ENCODE measurements at regions of chr11 and their contacts with region 1.

Region 1: GRCh38 chr11:86869966-86870570 is 69.7 kb downstream of the PRSS23 start:
- DNase-seq: peak; percentile 53
- H3K4me3 ChIP-seq: no peak overlapping the region
- H3K27ac ChIP-seq: no peak overlapping the region
- H3K4me1 ChIP-seq: no peaks in the 10 kb centered on the region
- CTCF ChIP-seq: peak; percentile 87

Region 2: DNA sequence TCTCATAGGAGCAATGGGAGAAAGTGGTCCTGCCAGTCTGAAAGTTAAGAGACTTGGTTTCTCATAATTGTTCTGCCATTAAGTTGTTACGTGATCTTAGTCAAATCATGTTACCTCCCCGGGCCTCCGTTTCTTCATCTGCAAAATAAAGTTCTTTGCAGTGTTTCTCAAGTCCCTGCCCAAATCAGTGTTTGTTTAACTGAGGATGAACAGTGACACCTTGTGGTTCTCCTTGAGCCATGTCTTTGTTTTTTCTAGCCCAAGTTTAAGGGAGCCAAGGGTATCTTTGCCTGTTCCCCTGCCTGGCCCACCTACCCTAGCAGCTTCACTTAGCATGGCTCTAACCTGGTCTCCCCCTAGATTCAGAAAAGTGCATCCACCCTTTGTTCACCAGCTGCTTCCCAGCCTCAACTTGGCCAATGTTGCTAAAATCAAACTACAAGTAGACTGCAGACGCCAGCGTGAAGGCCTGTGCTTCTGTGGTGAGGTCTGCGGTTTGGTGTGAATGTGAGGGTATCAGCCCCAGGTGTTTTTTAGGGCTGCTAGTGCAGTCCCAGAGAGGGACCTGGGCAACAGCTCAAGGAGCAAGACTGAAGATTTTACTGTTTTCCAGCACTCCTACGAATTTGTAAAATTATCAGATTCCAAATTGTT is 49.6 kb after region 1 on chr11:
- CTCF ChIA-PET with region 1: no interaction called
- POLR2A ChIA-PET with region 1: interaction called, 3 read pairs
- intact Hi-C with region 1: loop called (anchors 2 kb)
- DNase-seq: peak; percentile 48
- H3K4me3 ChIP-seq: no peak overlapping the region
- H3K27ac ChIP-seq: no peak overlapping the region
- H3K4me1 ChIP-seq: no peaks in the 10 kb centered on the region
- CTCF ChIP-seq: peak; percentile 79

Region 3: GRCh38 chr11:87203907-87204602 is 334.0 kb after region 1 on chr11:
- CTCF ChIA-PET with region 1: no interaction called
- POLR2A ChIA-PET with region 1: no interaction called
- intact Hi-C with region 1: no loop called
- DNase-seq: no peak
- H3K4me3 ChIP-seq: no peak overlapping the region
- H3K27ac ChIP-seq: no peak overlapping the region
- H3K4me1 ChIP-seq: no peaks in the 10 kb centered on the region
- CTCF ChIP-seq: no peak

Region 4: GRCh38 chr11:87265132-87265531 is 395.1 kb after region 1 on chr11:
- CTCF ChIA-PET with region 1: no interaction called
- POLR2A ChIA-PET with region 1: no interaction called
- intact Hi-C with region 1: no loop called
- DNase-seq: no peak
- H3K4me3 ChIP-seq: no peak overlapping the region
- H3K27ac ChIP-seq: no peak overlapping the region
- H3K4me1 ChIP-seq: no peaks in the 10 kb centered on the region
- CTCF ChIP-seq: no peak